ENCODE measurements at regions of chr5 and their contacts with region 1.

Region 1: DNA sequence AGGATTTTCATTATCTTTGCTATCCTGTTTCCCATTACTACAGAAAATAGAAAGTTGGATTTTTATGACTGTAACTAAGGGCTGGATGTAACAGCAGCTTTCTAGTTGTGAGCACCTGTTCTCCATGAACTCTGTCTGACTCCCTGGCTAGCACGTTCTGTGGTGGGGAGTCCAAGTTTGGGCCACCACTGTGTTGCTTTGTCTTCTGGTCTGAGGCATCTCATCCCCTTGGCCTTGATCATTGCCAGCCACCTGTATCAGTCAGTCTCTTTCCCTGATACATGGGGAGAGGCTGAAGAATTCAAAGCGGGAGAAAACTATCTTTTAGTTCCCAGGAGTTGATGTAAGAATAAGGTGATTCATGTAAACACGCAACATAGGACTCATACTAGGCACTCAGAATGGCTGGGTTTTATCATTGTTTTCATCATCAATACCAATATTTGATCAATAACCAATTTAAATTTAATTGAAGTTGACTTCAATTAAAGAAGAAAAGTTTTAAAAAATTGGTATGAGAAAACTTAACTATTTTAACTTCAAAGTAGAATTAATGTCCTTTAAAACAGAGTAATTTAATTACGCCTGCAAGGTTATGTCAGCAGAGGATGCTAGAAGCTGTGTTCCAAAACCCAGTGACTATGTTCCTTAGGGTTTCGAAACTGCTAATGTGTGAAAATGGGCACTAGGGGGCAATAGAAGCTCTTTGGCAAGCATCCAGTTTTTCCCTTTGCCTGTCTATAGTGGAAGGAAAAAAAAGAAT is 33.6 kb downstream of the WDR70 start:
- DNase-seq: peak; percentile 87
- H3K4me3 ChIP-seq: no peak overlapping the region
- H3K27ac ChIP-seq: no peak overlapping the region
- H3K4me1 ChIP-seq: no peaks in the 10 kb centered on the region
- H3K27me3 ChIP-seq: no peaks in the 10 kb centered on the region
- CTCF ChIP-seq: peak; percentile 73 to 91
- POLR2A ChIP-seq: no peak

Region 2: GRCh38 chr5:37424441-37424840 is 11.7 kb after region 1 on chr5:
- CTCF ChIA-PET with region 1: interaction called, 12 read pairs
- POLR2A ChIA-PET with region 1: no interaction called
- dilution Hi-C with region 1: no loop called
- intact Hi-C with region 1: no loop called
- DNase-seq: no peak
- H3K4me3 ChIP-seq: no peak overlapping the region
- H3K27ac ChIP-seq: no peak overlapping the region
- H3K4me1 ChIP-seq: no peaks in the 10 kb centered on the region
- H3K27me3 ChIP-seq: no peaks in the 10 kb centered on the region
- CTCF ChIP-seq: no peak
- POLR2A ChIP-seq: no peak

Region 3: DNA sequence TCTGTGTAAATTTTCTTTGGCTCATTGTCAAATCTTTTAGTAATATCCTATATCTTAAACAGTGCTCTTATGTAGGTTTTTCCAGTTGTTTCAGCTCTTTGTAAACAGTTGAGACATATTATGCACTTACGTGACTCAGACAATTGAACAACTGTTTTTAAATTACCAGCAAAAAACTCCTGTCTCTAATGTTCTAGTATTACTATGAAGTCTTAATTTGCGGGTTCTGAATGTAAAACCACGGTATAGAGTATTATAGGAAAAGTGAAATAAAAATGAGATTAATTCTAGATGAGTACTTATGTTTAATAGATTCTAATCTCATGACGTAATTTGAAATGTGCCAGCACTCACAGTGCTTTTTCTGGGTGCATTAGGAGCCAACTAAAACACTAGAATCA is 291.1 kb after region 1 on chr5:
- CTCF ChIA-PET with region 1: interaction called, 12 read pairs
- POLR2A ChIA-PET with region 1: no interaction called
- dilution Hi-C with region 1: no loop called
- intact Hi-C with region 1: no loop called
- DNase-seq: peak; percentile 91
- H3K4me3 ChIP-seq: peak overlapping the region in 1 of 3 experiments; percentile 33
- H3K27ac ChIP-seq: peak overlapping the region; percentile 75
- H3K4me1 ChIP-seq: peaks cover 18% of the 10 kb centered on the region
- H3K27me3 ChIP-seq: no peaks in the 10 kb centered on the region
- CTCF ChIP-seq: no peak
- POLR2A ChIP-seq: no peak

Region 4: DNA sequence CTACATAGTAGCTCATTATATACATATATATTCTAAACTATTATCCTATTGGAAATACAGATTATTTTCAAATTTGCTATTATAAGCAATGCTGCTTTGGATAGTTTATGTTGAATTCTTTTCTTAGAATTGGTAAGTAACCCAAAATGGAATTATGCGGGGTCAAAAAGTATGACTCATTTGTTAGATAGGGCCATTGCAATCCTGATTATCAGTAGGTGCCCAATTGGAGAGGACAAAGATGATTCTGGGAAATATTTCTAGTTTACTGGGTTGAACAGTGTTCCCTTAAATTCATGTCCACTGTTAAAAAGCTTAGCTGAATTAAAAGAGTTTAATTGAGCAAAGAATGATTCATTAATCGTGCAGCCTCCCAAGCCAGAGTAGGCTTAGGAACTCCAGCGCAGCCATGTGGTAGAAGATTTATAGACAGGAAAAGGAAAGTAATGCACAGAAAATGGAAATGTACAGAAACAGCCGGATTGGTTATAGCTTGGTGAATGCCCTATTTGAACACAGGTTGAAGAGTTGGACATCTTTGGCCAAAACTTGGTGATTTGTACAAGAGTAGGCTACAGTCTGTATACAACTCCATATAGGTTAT is 345.4 kb after region 1 on chr5:
- CTCF ChIA-PET with region 1: interaction called, 55 read pairs
- POLR2A ChIA-PET with region 1: no interaction called
- dilution Hi-C with region 1: no loop called
- intact Hi-C with region 1: loop called (anchors 1 kb)
- DNase-seq: peak; percentile 13
- H3K4me3 ChIP-seq: no peak overlapping the region
- H3K27ac ChIP-seq: no peak overlapping the region
- H3K4me1 ChIP-seq: no peaks in the 10 kb centered on the region
- H3K27me3 ChIP-seq: no peaks in the 10 kb centered on the region
- CTCF ChIP-seq: peak in 1 of 2 donors; percentile 12
- POLR2A ChIP-seq: no peak

Region 5: DNA sequence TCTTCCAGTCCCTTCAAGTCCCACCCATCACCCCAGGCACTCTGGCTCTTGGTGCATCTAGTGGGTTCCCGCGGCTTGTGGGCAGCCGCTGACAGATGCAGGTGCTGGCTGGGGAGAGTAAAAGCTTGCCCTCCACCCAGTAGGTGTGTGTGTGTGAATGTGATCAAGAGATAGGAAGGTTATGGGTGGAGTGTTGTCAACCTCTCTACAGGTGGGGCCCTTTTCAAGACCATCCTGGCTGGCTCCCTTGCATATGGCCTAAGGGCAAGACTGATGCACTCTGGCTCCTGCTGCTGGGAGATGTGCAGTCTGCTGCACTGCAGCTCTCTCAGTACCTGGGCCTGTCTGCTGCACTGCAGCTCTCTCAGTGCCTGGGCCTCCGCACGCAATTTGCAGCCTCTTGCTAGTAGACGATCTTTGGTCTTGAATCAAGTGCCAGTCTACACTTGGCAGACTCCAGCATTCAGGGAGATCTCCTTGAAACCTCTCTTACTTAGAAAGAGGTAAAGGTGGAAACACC is 616.8 kb after region 1 on chr5:
- CTCF ChIA-PET with region 1: no interaction called
- POLR2A ChIA-PET with region 1: no interaction called
- dilution Hi-C with region 1: no loop called
- intact Hi-C with region 1: loop called (anchors 5 kb)
- DNase-seq: no peak
- H3K4me3 ChIP-seq: no peak overlapping the region
- H3K27ac ChIP-seq: no peak overlapping the region
- H3K4me1 ChIP-seq: no peaks in the 10 kb centered on the region
- H3K27me3 ChIP-seq: peaks cover 0 to 3% of the 10 kb centered on the region in 2 experiments
- CTCF ChIP-seq: no peak
- POLR2A ChIP-seq: no peak

Measured in endothelial cell of umbilical vein (primary cell).